B cell (primary cell): ENCODE measurements at regions of chr12 and their contacts with region 1.

Region 1: GRCh38 chr12:94621664-94622359 is 28.5 kb downstream of the TMCC3 start:
- DNase-seq: peak; percentile 51
- ATAC-seq: peak; percentile 65
- H3K4me3 ChIP-seq: peak overlapping the region in 4 of 5 experiments; percentile 9 to 31 (median 28)
- H3K4me3 Mint-ChIP-seq: peak overlapping the region; percentile 83
- H3K27ac ChIP-seq: peak overlapping the region in 1 of 2 donors; percentile 35
- H3K27ac Mint-ChIP-seq: peak overlapping the region; percentile 74
- H3K4me1 ChIP-seq: peaks cover 11 to 12% of the 10 kb centered on the region in 2 donors
- H3K4me1 Mint-ChIP-seq: peaks cover 19% of the 10 kb centered on the region
- H3K27me3 ChIP-seq: no peaks in the 10 kb centered on the region
- H3K27me3 Mint-ChIP-seq: no peaks in the 10 kb centered on the region
- CTCF ChIP-seq: no peak

Region 2: DNA sequence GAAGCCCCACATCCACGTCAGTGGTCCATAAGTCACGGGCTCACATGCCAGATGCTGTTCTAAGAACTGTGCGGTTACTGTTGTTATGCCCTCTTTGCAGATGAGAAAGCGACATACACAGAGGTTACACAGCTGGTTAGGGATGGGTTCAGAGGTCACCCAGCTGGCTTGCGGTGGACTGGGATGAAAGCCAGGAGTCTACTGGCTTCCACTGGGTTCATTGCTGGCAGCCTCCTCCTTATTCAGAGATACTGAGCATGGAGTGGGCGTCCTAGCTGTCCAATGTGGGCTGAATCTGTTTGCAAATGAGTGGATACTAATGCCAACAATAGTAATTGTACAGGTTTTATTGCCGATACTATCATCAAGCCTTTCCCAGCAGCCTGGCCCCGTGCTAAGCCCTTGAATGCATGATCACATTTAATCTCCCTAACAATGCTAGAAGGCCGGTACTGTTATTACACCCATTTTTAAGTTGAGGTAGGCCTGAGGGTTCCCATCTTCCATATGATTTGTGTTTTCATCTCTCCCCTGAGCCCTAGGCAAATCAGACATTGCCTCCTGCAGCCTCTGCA is 344.3 kb before region 1 on chr12:
- CTCF ChIA-PET with region 1: no interaction called
- POLR2A ChIA-PET with region 1: interaction called, 10 read pairs
- intact Hi-C with region 1: no loop called
- DNase-seq: no peak
- ATAC-seq: no peak
- H3K4me3 ChIP-seq: no peak overlapping the region
- H3K4me3 Mint-ChIP-seq: no peak overlapping the region
- H3K27ac ChIP-seq: no peak overlapping the region
- H3K27ac Mint-ChIP-seq: no peak overlapping the region
- H3K4me1 ChIP-seq: peaks cover 3 to 5% of the 10 kb centered on the region in 2 donors
- H3K4me1 Mint-ChIP-seq: peaks cover 17% of the 10 kb centered on the region
- H3K27me3 ChIP-seq: no peaks in the 10 kb centered on the region
- H3K27me3 Mint-ChIP-seq: no peaks in the 10 kb centered on the region
- CTCF ChIP-seq: no peak

Region 3: DNA sequence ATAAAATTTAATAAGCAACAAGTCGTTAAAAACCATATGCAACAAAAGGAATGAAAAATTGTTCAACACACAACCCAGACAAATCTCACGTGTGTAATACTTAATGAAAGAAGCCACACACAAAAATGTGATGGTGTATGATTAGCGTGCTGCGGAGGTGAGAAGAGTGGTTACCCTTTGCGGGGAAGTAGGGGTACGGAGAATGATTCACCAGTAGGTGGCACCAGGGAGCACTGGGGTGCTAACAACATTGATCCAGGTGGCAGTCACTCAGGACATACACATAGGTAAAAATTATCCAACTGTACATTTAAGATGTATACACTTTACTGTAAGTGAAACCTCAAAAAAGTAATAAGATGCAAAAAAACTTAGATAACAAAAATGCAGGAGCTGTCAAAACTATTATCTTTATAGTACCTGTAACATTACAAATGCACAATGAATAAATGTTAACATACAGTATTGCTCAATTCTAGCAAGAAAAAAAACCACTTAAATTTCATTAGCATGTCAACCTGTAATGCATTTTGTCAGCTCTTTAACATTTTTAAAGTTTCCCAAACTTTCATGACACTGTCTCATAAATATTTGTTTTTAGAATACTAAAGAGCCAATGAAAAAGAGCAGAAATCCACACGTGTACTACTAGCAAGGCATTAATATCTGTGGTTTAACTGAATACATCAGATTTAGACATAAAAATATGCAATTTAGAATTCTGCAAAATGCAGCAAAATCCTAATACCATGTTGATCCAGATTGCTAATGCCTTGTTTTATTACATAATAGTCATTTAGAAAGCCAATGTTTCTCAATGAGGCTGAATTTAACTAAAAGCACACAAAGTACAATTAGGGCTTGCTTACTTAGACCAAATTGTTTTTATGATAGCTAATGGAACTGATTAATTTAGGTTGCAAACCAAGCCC is 18.1 kb before region 1 on chr12:
- CTCF ChIA-PET with region 1: interaction called, 13 read pairs
- POLR2A ChIA-PET with region 1: no interaction called
- intact Hi-C with region 1: no loop called
- DNase-seq: peak; percentile 68
- ATAC-seq: peak; percentile 70
- H3K4me3 ChIP-seq: no peak overlapping the region
- H3K4me3 Mint-ChIP-seq: no peak overlapping the region
- H3K27ac ChIP-seq: no peak overlapping the region
- H3K27ac Mint-ChIP-seq: no peak overlapping the region
- H3K4me1 ChIP-seq: no peaks in the 10 kb centered on the region
- H3K4me1 Mint-ChIP-seq: no peaks in the 10 kb centered on the region
- H3K27me3 ChIP-seq: no peaks in the 10 kb centered on the region
- H3K27me3 Mint-ChIP-seq: no peaks in the 10 kb centered on the region
- CTCF ChIP-seq: peak; percentile 77